Heart right ventricle (tissue), 16 donors: ENCODE measurements at regions of chr11 and their contacts with region 1.

Region 1: DNA sequence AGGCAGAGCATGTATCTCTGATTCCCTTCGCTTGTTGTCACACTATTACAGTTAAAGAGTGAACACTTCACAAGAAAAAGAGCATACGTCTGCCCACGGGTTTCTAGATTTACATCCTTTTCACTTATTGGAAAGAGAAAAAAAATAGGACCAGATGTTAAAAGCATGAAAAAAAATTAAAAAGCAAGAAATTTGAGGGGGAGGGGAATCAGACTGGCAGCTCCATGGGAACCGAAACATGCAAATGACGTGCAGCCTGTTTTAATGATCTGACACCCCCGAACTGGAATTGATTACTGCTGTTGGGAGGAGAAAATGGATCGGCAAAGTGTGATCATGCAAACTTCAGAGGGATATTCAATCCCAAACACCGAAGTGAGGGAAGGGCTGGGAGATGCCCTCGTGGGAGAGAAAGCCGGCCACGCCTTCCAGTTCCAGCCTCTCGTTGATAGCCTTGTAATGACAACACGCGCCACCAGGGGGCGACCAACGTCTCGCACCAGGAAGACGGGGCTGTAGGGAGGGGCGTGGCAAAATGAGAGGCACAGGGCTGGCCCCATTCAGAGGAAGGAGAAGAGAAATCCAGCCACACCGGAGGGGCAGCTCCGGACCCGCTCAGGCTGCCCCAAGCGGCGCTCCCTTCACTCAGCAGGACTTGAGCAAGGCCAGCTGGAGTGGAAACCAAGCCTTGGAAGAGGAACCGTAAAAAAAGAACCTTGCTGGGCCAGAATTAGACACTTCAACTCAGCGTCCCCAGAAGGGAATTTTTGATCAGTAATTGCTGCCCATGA is 53.8 kb upstream of the SYT13 start:
- DNase-seq: peak; percentile 94 to 95
- ATAC-seq: peak; percentile 82 to 97 (median 95)
- H3K4me3 ChIP-seq: peak overlapping the region in 8 of 10 donors; percentile 13 to 33 (median 20)
- H3K27ac ChIP-seq: peak overlapping the region in 2 of 10 donors; percentile 0 to 16
- H3K4me1 ChIP-seq: peaks cover 0 to 15% (median 9%) of the 10 kb centered on the region in 9 donors
- H3K27me3 ChIP-seq: peaks cover 0 to 14% (median 0%) of the 10 kb centered on the region in 7 donors
- CTCF ChIP-seq: peak; percentile 91 to 97 (median 96)

Region 2: GRCh38 chr11:44936525-44936924 is 403.4 kb before region 1 on chr11:
- intact Hi-C with region 1: loop called in 7 of 10 experiments (anchors 5 to 10 kb)
- DNase-seq: peak; percentile 79 to 82
- ATAC-seq: peak; percentile 16 to 67 (median 56)
- H3K4me3 ChIP-seq: no peak overlapping the region
- H3K27ac ChIP-seq: no peak overlapping the region
- H3K4me1 ChIP-seq: peaks cover 20 to 52% (median 34%) of the 10 kb centered on the region in 9 donors
- H3K27me3 ChIP-seq: no peaks in the 10 kb centered on the region
- CTCF ChIP-seq: peak in 8 of 9 donors; percentile 92 to 97 (median 95)

Region 3: GRCh38 chr11:44943118-44943517 is 396.8 kb before region 1 on chr11:
- intact Hi-C with region 1: loop called in 7 of 10 experiments (anchors 5 to 10 kb)
- DNase-seq: no peak
- ATAC-seq: no peak
- H3K4me3 ChIP-seq: no peak overlapping the region
- H3K27ac ChIP-seq: peak overlapping the region in 3 of 10 donors; percentile 34 to 43 (median 41)
- H3K4me1 ChIP-seq: peaks cover 29 to 96% (median 77%) of the 10 kb centered on the region in 9 donors
- H3K27me3 ChIP-seq: no peaks in the 10 kb centered on the region
- CTCF ChIP-seq: no peak

Region 4: GRCh38 chr11:44950625-44951476 is 389.1 kb before region 1 on chr11 and contains the start of gene TP53I11:
- intact Hi-C with region 1: loop called in 3 of 10 experiments (anchors 10 kb)
- DNase-seq: peak; percentile 85 to 91
- ATAC-seq: peak; percentile 74 to 91 (median 86)
- H3K4me3 ChIP-seq: peak within 1 kb of the TSS; percentile 55 to 98 (median 83)
- H3K27ac ChIP-seq: peak within 1 kb of the TSS; percentile 44 to 95 (median 90)
- H3K4me1 ChIP-seq: peaks cover 7 to 82% (median 53%) of the 10 kb centered on the region in 9 donors
- H3K27me3 ChIP-seq: no peaks in the 10 kb centered on the region
- CTCF ChIP-seq: peak; percentile 73 to 96 (median 86)
- total RNA-seq, gene TP53I11: 22.8 to 89.4 (median 32.7) TPM